Activated CD4-positive, alpha-beta memory T cell treated with anti-CD3 and anti-CD28 coated beads for 36 hours (primary cell): ENCODE measurements at regions of chr16 and their contacts with region 1.

Region 1: GRCh38 chr16:46929378-46930332 is 43.8 kb downstream of the DNAJA2 start:
- DNase-seq: peak; percentile 82
- H3K4me3 Mint-ChIP-seq: no peak overlapping the region
- H3K27ac Mint-ChIP-seq: no peak overlapping the region
- H3K4me1 Mint-ChIP-seq: no peaks in the 10 kb centered on the region
- H3K27me3 Mint-ChIP-seq: no peaks in the 10 kb centered on the region

Region 2: DNA sequence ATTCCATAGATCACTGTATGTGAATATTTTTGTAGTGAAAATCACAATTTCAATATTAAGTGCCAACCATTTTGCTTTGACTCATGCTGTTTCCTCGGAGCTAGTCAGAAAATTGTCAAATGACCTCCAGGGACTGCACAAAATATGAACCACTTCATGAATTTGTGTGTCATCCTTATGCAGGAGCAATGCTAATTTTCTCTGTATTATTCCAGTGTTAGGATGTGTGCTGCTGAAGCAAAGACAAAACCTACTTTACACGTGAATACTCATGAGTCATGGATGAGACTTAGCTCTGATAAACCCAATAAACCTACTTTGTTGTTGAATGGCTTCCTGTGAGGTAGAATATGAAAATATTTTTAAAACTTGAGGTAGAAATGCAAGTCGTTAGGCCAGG is 373.7 kb before region 1 on chr16:
- CTCF ChIA-PET with region 1: interaction called, 8 read pairs
- POLR2A ChIA-PET with region 1: no interaction called
- intact Hi-C with region 1: loop called (anchors 10 kb)
- DNase-seq: no peak
- H3K4me3 Mint-ChIP-seq: no peak overlapping the region
- H3K27ac Mint-ChIP-seq: no peak overlapping the region
- H3K4me1 Mint-ChIP-seq: no peaks in the 10 kb centered on the region
- H3K27me3 Mint-ChIP-seq: peaks cover 8% of the 10 kb centered on the region

Region 3: DNA sequence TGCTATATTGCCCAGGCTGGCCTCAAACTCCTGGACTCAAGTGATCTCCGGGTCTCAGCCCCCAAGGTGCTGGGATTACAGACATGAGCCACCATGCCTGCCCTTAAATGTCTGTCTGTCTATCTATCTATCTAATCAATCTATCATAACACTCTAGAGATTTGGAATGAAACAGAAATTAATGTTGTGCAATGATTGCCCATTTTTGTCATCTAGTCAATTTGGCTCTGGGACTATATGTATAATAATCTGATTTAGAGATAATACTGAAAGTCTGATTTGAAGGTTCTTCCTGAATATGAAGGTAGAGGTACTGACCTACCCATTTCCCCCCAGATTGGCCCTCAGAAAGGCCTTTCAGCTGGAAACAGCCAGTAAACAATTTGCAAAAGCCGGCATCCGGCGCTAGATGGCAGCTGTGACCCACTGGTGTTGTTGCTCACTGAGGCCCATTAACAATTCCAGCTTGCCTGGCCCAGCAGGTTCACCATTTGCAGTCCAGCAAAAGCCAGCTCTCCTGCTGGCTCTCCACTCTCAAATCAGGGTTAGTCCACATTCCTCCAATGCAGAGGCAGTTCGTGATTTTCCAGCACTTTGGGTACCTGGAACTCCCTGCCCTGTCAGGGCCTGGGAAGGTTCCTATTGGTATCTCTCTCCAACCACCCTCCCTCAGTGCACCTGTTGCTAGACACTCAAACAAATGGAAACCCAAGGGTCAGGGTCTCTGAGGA is 75.8 kb before region 1 on chr16:
- CTCF ChIA-PET with region 1: interaction called, 59 read pairs
- POLR2A ChIA-PET with region 1: no interaction called
- intact Hi-C with region 1: loop called (anchors 1 kb)
- DNase-seq: peak; percentile 77
- H3K4me3 Mint-ChIP-seq: no peak overlapping the region
- H3K27ac Mint-ChIP-seq: no peak overlapping the region
- H3K4me1 Mint-ChIP-seq: no peaks in the 10 kb centered on the region
- H3K27me3 Mint-ChIP-seq: peaks cover 3% of the 10 kb centered on the region

Region 4: GRCh38 chr16:46918861-46919792 is 10.5 kb before region 1 on chr16:
- CTCF ChIA-PET with region 1: interaction called, 27 read pairs
- POLR2A ChIA-PET with region 1: no interaction called
- intact Hi-C with region 1: no loop called
- DNase-seq: peak; percentile 51
- H3K4me3 Mint-ChIP-seq: no peak overlapping the region
- H3K27ac Mint-ChIP-seq: no peak overlapping the region
- H3K4me1 Mint-ChIP-seq: peaks cover 10% of the 10 kb centered on the region
- H3K27me3 Mint-ChIP-seq: no peaks in the 10 kb centered on the region

Region 5: GRCh38 chr16:46973207-46973995 is 43.7 kb after region 1 on chr16 and contains the start of gene DNAJA2:
- CTCF ChIA-PET with region 1: no interaction called
- POLR2A ChIA-PET with region 1: no interaction called
- intact Hi-C with region 1: no loop called
- DNase-seq: peak; percentile 94
- H3K4me3 Mint-ChIP-seq: peak within 1 kb of the TSS; percentile 98
- H3K27ac Mint-ChIP-seq: peak within 1 kb of the TSS; percentile 98
- H3K4me1 Mint-ChIP-seq: peaks cover 59% of the 10 kb centered on the region
- H3K27me3 Mint-ChIP-seq: no peaks in the 10 kb centered on the region
- total RNA-seq, gene DNAJA2: 78.9 to 80.6 TPM

Region 6: GRCh38 chr16:46996391-46996790 is 66.7 kb after region 1 on chr16:
- CTCF ChIA-PET with region 1: no interaction called
- POLR2A ChIA-PET with region 1: no interaction called
- intact Hi-C with region 1: no loop called
- DNase-seq: peak; percentile 14
- H3K4me3 Mint-ChIP-seq: no peak overlapping the region
- H3K27ac Mint-ChIP-seq: no peak overlapping the region
- H3K4me1 Mint-ChIP-seq: peaks cover 4% of the 10 kb centered on the region
- H3K27me3 Mint-ChIP-seq: no peaks in the 10 kb centered on the region